Activated naive CD4-positive, alpha-beta T cell treated with anti-CD3 and anti-CD28 coated beads for 36 hours (primary cell): ENCODE measurements at regions of chr9 and their contacts with region 1.

Region 1: DNA sequence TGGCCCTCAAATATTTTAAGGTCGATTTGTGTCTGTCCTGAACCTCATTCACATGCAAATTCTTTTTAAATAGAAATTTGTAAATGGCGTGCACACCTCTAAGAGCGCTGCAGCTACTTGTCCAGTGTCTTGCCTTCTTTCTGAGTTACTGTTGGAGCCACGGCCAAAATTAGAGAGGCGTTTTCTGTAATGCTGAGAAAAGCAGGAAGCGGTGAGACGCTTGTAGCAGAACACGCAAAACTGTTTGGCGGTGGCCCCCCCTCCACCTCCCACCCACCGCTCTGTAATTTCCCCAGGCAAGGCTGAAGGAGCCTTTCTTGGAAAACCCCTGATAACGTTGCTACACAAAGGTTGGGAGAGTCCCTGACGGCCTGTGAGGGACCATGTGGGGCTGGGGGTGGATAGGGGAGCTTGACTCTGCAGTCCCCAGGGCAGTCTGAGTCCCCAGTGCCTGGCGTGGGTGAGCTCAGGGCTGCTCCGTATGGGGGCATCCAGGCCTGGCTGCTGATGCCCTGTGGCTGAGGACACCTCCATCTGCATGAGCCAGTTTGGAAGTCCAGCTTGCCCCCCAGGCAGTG is 96.5 kb downstream of the GADD45G start:
- DNase-seq: peak; percentile 93
- H3K4me3 Mint-ChIP-seq: peak overlapping the region; percentile 50
- H3K27ac Mint-ChIP-seq: peak overlapping the region; percentile 85
- H3K4me1 Mint-ChIP-seq: peaks cover 30% of the 10 kb centered on the region
- H3K27me3 Mint-ChIP-seq: no peaks in the 10 kb centered on the region

Region 2: GRCh38 chr9:89461265-89461664 is 240.0 kb before region 1 on chr9:
- CTCF ChIA-PET with region 1: no interaction called
- intact Hi-C with region 1: loop called (anchors 5 kb)
- DNase-seq: peak; percentile 71
- H3K4me3 Mint-ChIP-seq: no peak overlapping the region
- H3K27ac Mint-ChIP-seq: peak overlapping the region; percentile 50
- H3K4me1 Mint-ChIP-seq: peaks cover 96% of the 10 kb centered on the region
- H3K27me3 Mint-ChIP-seq: no peaks in the 10 kb centered on the region

Region 3: DNA sequence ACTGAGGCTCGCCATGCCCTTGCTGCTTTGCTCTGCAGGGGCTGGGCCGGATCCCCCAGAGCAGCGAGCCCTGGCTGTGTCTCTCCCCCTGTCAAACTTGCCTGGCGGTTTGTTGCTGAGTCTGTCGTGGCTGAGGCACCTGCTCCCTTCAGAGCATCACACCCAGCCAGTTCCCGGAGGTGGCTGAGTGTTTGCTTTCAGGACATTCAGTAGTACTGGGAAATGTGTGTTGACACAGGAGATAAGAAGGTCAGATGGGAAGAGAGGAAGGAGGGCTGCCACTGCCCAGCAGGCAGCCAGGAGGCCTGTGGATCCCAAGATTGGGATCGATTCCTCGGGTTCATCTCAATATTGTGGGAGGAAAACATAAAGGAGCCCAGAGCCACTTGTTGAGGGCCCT is 33.6 kb before region 1 on chr9:
- CTCF ChIA-PET with region 1: no interaction called
- intact Hi-C with region 1: loop called (anchors 1 kb)
- DNase-seq: no peak
- H3K4me3 Mint-ChIP-seq: no peak overlapping the region
- H3K27ac Mint-ChIP-seq: no peak overlapping the region
- H3K4me1 Mint-ChIP-seq: peaks cover 8% of the 10 kb centered on the region
- H3K27me3 Mint-ChIP-seq: no peaks in the 10 kb centered on the region

Region 4: DNA sequence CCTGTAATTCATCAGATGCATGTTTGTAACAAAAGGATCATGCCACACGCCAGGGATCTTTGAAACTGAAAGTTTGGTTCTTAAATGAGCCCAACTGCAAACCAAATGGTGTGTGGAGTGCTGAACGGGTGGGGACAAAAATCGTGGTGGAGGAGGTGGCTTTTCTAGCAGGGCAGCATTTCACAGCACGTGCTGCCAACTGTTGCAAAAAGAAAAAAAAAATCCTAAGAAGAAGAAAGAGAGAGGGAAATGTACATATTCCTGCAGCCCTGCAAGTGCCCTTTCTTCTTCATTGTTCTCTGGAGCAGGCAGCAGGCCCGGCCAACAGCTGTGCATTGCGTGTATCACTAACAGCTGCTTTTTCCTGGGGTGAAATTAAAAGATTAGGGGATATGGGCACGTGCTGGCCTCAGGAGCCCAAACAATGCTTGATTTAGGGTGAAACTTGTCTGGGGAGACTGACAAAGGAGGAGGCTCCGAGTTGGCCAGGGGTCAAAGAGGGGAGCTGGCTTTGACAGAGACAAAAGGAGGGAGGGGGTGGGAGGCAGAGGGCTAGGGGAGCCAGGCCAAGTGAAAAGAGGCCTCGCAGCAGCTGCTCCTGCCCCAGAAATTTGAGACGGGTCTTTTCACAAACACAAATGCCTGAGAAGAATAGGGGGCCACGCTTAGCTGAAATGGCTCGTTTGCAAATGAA is 23.5 kb before region 1 on chr9:
- CTCF ChIA-PET with region 1: no interaction called
- intact Hi-C with region 1: no loop called
- DNase-seq: no peak
- H3K4me3 Mint-ChIP-seq: no peak overlapping the region
- H3K27ac Mint-ChIP-seq: no peak overlapping the region
- H3K4me1 Mint-ChIP-seq: no peaks in the 10 kb centered on the region
- H3K27me3 Mint-ChIP-seq: no peaks in the 10 kb centered on the region

Region 5: GRCh38 chr9:89891591-89892304 is 190.4 kb after region 1 on chr9:
- CTCF ChIA-PET with region 1: no interaction called
- intact Hi-C with region 1: no loop called
- DNase-seq: no peak
- H3K4me3 Mint-ChIP-seq: no peak overlapping the region
- H3K27ac Mint-ChIP-seq: no peak overlapping the region
- H3K4me1 Mint-ChIP-seq: no peaks in the 10 kb centered on the region
- H3K27me3 Mint-ChIP-seq: peaks cover 3% of the 10 kb centered on the region